HAP-1 (cell line): ENCODE measurements at regions of chr1 and their contacts with region 1.

Region 1: DNA sequence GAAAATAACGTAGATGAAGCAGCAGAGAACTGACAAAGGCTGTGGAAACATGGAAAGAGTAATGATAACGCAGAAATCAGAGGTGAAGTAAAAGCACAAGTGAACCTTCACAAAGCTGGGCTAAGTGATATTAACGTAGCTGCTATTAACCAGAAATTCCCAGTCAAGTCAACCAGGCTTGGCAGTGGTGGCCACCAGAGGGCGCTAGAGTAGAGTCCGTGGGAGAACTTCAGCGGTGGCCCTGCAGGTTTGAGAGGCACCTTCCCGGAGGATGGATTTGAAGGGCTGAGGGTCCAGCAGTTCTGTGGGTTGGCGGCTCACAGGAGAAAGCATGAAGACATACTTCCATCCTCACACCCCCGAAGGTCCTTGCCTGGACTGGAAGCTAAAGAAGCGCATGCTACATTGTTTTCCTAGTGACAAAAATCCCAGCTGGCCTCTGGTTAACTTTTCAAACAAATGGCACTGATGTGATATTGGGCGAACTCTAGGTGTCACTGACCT is 81.7 kb upstream of the ZNF648 start:
- DNase-seq: peak; percentile 59 to 93
- H3K4me3 ChIP-seq: no peak overlapping the region
- H3K4me1 ChIP-seq: no peaks in the 10 kb centered on the region
- H3K27me3 ChIP-seq: no peaks in the 10 kb centered on the region

Region 2: GRCh38 chr1:182397771-182398393 is 254.7 kb after region 1 on chr1:
- in situ Hi-C with region 1: loop called (anchors 5 kb)
- DNase-seq: no peak
- H3K4me3 ChIP-seq: no peak overlapping the region
- H3K4me1 ChIP-seq: peaks cover 9% of the 10 kb centered on the region
- H3K27me3 ChIP-seq: no peaks in the 10 kb centered on the region